ENCODE measurements at regions of chr7 and their contacts with region 1.

Region 1: DNA sequence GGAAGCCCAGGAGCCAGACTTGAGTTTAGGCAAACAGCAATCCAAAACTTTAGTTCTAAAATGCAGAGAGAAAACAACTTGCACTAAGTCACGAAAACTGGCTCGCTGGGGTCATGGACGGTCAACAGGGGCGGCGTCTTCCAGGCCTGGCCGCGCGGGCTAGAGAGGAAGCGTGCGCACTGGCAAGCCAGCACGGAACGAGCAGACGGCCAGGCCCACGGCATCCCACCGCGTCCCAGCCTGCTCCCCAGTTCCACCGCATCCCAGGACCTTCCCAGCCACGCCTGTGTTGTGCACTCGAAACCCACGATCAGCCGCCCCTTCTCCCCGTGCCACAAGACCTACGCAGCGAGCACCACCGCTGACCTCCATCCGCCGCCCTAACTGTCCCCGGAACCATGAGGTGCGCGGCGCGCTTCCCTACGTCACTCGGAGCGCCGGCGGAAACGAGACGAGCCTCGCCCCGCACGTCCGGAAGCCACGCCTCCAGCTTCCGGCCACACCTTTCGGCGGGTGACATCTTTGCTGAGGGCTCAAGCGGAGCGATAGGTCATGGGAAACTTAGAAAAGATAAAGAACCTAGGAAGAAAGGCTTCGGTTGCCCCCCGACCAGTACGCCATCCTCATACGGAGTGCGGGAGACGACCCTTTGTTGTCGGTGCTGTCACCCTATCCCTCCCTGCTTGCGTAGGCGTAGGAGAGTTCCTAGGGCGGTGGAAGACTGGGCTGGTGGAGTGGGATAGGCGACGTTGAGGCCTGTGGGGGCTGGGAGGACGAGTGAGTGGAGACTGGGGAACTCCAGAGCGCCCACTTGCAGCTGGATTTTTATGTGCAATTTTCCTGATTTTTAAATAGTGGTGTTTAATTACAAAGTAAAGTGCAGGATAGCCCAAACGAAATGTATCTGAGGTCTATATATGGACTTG is at the start of gene TBRG4:
- DNase-seq: peak; percentile 90 to 96 (median 94)
- ATAC-seq: peak; percentile 80
- H3K4me3 Mint-ChIP-seq: peak within 1 kb of the TSS; percentile 93 to 100 (median 96)
- H3K27ac Mint-ChIP-seq: peak within 1 kb of the TSS; percentile 97 to 100 (median 99)
- H3K4me1 Mint-ChIP-seq: peaks cover 19 to 56% (median 49%) of the 10 kb centered on the region in 4 donors
- H3K27me3 Mint-ChIP-seq: no peaks in the 10 kb centered on the region
- polyA plus RNA-seq, gene TBRG4: 51.3 to 95.7 (median 69.0) TPM

Region 2: DNA sequence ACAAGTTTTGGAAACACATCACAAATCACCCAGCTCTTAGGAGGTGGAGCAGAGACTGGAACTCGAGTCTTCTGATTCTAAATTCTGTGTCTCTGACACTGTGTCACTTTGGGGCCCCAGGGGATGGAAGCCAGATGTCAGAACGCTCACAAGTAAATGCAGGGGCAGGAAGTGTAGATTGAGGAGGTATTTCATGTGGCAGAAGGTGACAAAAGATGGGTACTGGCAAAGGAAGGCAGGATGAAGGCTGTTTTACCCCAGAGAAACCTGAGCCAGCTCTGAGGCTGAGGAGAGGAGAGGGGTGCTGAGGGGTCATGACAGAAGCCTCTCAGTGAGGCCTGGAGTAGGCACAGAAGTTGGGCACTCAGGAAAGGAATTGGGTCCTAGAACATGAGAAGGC is 220.2 kb before region 1 on chr7:
- POLR2A ChIA-PET with region 1: no interaction called
- DNase-seq: peak in 9 of 10 donors; percentile 12 to 77 (median 63)
- ATAC-seq: peak; percentile 97 to 98
- H3K4me3 Mint-ChIP-seq: peak overlapping the region; percentile 21 to 83 (median 63)
- H3K27ac Mint-ChIP-seq: peak overlapping the region; percentile 92 to 99 (median 98)
- H3K4me1 Mint-ChIP-seq: peaks cover 14 to 34% (median 26%) of the 10 kb centered on the region in 4 donors
- H3K27me3 Mint-ChIP-seq: no peaks in the 10 kb centered on the region

Region 3: DNA sequence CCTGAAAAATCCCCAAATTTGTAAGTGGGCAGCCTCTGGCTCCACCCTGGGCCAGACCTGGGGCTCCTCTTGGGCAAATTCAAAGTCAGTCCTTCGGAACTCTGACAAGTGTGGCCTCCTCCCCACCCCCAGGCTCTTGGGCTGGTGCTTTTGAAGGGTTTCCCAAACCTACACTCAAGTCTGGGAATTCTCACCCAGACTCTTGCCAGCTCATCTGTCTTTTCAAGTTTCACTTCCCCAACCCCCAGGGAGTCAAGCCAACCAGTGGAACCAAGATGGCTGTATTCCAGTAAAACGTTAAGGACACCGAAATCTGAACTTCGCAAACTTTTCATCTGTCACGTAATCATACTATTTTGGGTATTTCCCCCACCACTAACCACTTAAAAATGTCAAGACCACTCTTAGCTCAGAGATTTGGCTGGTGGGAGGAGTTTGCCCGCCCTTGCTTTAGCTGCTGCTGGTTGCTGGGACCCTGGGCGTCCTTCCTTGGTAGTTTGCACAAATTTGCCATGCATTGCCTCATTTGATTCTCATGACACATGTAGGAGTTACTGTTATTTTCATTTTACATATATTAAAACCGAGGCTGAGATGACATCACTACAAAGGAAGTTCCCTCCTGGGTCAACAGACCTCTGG is 131.0 kb before region 1 on chr7:
- POLR2A ChIA-PET with region 1: interaction called, 21 read pairs
- DNase-seq: peak in 9 of 10 donors; percentile 21 to 71 (median 53)
- ATAC-seq: peak; percentile 29 to 39
- H3K4me3 Mint-ChIP-seq: peak overlapping the region; percentile 32 to 99 (median 94)
- H3K27ac Mint-ChIP-seq: peak overlapping the region; percentile 78 to 98 (median 94)
- H3K4me1 Mint-ChIP-seq: peaks cover 35 to 88% (median 82%) of the 10 kb centered on the region in 4 donors
- H3K27me3 Mint-ChIP-seq: no peaks in the 10 kb centered on the region

Region 4: GRCh38 chr7:44999245-45000095 is 112.1 kb before region 1 on chr7:
- POLR2A ChIA-PET with region 1: interaction called, 21 read pairs
- DNase-seq: peak; percentile 96 to 100 (median 98)
- ATAC-seq: peak; percentile 82 to 83
- H3K4me3 Mint-ChIP-seq: peak overlapping the region; percentile 84 to 98 (median 97)
- H3K27ac Mint-ChIP-seq: peak overlapping the region; percentile 91 to 99 (median 97)
- H3K4me1 Mint-ChIP-seq: peaks cover 21 to 66% (median 50%) of the 10 kb centered on the region in 4 donors
- H3K27me3 Mint-ChIP-seq: no peaks in the 10 kb centered on the region

Region 5: DNA sequence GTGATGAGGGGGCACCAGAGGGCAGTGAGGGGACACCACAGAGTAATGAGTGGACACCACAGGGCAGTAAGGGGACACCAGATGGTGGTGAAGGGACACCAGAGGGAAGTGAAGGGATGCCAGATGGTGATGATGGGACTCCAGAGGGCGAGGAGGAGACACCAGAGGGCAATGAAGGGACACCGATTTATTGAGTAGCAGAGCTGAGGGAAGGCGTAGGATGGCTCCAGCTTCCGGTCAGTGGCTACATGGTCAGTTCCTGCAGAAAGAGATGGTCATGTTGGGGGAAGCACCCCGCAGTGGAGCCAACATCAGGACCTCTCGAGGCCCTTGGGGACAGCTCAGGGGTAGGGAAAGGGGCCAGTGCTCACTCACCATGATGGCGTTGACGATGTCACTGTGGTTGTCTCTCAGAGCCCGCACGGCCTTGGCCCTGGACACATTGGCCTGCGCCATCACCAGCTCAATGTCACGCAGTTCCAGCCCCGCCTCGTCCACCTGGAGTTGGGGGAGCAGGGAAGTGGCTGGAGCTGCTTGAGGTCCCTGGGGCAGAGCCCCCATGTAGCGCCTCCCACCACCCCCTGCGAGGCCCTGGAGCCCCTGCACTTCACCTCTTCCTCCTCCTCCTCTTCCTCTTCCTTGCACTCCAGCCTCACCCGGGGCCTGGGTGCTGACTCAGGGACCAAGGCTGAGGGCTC is 31.1 kb before region 1 on chr7:
- POLR2A ChIA-PET with region 1: interaction called, 13 read pairs
- DNase-seq: peak in 1 of 10 donors; percentile 58
- ATAC-seq: peak; percentile 22 to 39
- H3K4me3 Mint-ChIP-seq: no peak overlapping the region
- H3K27ac Mint-ChIP-seq: peak overlapping the region; percentile 29 to 89 (median 66)
- H3K4me1 Mint-ChIP-seq: peaks cover 5 to 35% (median 18%) of the 10 kb centered on the region in 4 donors
- H3K27me3 Mint-ChIP-seq: no peaks in the 10 kb centered on the region

Region 6: DNA sequence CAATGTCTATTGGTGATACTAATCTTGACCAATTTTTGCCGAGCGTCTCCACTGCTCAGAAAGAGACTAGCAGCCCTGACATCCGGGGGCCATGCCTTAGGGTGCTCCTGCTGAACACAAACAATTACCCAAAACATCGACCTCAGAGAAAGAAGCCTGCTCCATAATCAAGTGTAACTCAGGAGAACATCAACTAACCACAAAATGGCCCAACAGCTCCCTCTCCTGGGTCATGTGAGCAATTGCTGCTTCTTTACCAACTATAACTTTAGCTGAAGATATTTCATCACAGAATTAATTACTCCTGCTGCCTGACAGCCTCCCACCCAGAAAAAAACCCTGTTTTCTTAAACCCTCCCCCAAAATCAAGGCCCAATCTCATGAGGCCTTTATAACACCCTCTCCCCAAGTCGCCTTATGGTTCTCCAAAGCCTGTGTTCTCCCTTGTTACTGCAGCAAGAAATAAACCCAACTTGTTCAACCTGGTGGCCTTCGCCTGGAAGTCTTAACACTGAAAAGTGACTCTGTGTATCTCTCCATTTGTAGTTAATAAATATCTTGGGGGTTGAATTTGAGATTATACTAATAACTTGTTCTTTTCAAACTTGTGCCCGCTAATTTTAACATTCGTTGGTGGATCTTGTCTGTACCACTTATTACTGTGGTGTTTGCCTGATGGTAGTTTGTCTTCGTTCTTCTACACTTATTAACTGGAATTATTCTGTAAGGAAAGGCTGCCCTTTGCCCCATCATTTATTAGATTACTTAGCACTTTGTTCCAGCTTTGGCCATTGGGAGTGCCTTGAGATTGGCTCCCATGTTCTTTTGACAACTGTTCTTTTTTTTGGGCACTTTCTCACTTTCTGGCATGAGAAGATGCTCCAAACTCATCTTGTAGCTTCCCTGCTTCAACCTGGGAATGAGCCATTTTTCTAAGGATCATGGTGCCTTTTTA is 24.8 kb after region 1 on chr7:
- POLR2A ChIA-PET with region 1: interaction called, 11 read pairs
- DNase-seq: peak; percentile 40 to 83 (median 68)
- ATAC-seq: peak; percentile 83 to 96
- H3K4me3 Mint-ChIP-seq: no peak overlapping the region
- H3K27ac Mint-ChIP-seq: peak overlapping the region in 7 of 10 donors; percentile 7 to 82 (median 46)
- H3K4me1 Mint-ChIP-seq: peaks cover 6 to 15% (median 11%) of the 10 kb centered on the region in 4 donors
- H3K27me3 Mint-ChIP-seq: peaks cover 0 to 7% (median 0%) of the 10 kb centered on the region in 5 donors

Measured in naive thymus-derived CD8-positive, alpha-beta T cell (primary cell).